ENCODE measurements at regions of chr1 and their contacts with region 1.

Region 1: DNA sequence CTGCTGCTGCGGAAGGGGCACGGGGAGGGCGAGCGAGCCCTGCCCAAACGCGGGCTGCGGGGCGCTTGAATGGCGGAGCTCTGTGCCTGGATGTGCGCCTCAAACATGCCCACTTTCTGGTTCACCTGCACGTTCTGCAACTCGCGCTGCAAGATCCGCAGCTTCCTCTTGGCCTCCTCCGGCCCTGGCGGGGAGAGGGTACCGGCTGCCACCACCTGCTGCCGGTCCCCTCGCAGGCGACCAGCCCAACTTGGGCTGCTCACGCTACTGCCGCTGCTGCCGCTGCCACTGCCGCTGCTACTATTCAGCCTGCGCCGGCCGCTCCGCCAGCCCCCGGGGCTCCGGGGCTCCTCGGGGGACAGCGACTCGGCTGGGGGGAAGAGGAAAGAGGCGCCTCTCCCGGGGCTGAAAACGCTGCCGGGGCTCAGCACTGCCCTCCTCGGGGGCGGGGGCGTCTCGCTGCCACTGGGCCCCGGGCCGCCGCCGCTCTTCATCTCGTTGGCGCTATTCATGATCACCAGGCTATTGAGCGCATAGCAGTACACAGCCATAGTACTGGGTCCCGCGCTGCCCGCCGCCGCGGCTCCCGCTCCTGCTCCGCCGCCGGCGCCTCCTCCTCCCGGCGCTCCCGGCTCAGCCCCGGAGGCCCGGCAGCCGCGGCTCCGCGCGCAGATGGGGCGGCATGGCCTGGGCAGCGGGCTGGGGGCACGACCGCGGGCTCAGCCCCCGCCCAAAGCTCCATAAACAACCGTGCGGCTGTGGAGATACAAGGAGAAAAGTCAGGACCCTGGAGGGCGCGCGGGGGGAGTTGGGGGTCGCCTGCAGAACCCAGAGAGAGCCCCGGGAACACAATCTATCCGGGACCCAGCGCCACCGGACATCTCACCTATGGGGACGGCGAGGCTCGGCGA is 1.9 kb downstream of the ITPKB start:
- DNase-seq: peak; percentile 24 to 32
- ATAC-seq: peak; percentile 70 to 71
- H3K4me3 ChIP-seq: peak overlapping the region; percentile 79 to 86 (median 84)
- H3K27ac ChIP-seq: peak overlapping the region; percentile 84 to 91 (median 88)
- H3K4me1 ChIP-seq: peaks cover 23 to 29% of the 10 kb centered on the region in 2 donors
- H3K27me3 ChIP-seq: no peaks in the 10 kb centered on the region
- CTCF ChIP-seq: peak in 3 of 5 experiments; percentile 15 to 31 (median 29)
- POLR2A ChIP-seq: peak; percentile 17 to 59

Region 2: DNA sequence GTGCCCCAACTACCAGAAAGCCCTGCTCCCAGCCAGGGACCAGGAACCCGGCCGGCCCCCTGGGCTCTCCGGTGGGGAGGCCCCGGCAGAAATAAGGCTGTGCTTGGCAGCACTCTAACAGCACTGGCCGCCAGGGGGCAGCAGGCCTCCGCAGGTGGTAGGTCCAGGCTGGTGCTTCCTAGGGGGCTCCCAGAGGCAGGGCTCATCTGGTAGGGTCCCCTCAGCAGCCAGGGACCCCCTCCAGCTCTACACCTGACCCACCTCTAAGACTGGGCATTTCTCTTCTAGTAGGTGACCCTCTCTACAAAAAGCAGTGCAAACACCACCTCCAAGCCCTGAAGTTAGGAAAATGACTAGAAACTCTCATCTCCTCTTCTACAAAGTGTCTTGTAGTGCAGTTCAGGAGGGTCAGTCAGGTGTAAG is 103.0 kb before region 1 on chr1:
- in situ Hi-C with region 1: no loop called
- intact Hi-C with region 1: loop called (anchors 5 kb)
- DNase-seq: peak; percentile 56 to 75
- ATAC-seq: peak; percentile 64 to 75
- H3K4me3 ChIP-seq: no peak overlapping the region
- H3K27ac ChIP-seq: peak overlapping the region; percentile 46 to 71 (median 66)
- H3K4me1 ChIP-seq: peaks cover 33 to 41% of the 10 kb centered on the region in 2 donors
- H3K27me3 ChIP-seq: no peaks in the 10 kb centered on the region
- CTCF ChIP-seq: peak; percentile 90 to 98 (median 98)
- POLR2A ChIP-seq: no peak

Region 3: DNA sequence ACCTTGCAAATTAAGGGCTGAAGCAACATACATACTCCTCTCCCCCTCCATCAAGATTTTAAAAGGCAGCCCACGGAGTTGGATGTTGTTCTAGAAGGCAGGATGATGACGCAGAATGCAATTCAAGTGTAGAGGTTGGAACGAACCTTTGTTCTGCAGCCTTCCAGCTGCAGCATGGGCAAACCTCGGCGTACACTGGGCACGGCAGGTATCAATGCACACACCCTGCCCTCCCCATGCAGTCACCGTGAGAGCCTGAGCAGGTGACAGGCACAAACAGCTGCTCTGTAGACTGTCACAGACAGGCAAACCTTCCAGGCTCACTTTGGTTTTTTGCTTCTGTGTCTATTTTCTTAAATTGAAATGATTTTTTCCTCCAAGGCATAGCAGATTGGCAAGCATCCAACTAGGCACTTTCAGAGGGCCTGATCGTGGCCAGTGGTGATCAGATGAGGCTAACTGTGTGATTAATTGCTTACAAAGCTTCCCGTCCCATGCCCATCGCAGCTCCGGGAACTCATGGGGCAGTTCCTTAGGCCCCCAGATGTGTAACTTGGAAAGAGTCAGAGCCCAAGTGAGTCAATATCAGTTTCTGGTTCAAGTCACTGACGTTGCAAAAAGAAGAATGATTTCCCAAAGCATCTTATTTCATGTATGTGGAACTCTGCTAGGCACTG is 80.4 kb before region 1 on chr1:
- in situ Hi-C with region 1: no loop called
- intact Hi-C with region 1: loop called (anchors 5 kb)
- DNase-seq: no peak
- ATAC-seq: peak; percentile 21 to 35
- H3K4me3 ChIP-seq: no peak overlapping the region
- H3K27ac ChIP-seq: no peak overlapping the region
- H3K4me1 ChIP-seq: peaks cover 77 to 79% of the 10 kb centered on the region in 2 donors
- H3K27me3 ChIP-seq: no peaks in the 10 kb centered on the region
- CTCF ChIP-seq: no peak
- POLR2A ChIP-seq: peak in 1 of 2 donors; percentile 21

Region 4: DNA sequence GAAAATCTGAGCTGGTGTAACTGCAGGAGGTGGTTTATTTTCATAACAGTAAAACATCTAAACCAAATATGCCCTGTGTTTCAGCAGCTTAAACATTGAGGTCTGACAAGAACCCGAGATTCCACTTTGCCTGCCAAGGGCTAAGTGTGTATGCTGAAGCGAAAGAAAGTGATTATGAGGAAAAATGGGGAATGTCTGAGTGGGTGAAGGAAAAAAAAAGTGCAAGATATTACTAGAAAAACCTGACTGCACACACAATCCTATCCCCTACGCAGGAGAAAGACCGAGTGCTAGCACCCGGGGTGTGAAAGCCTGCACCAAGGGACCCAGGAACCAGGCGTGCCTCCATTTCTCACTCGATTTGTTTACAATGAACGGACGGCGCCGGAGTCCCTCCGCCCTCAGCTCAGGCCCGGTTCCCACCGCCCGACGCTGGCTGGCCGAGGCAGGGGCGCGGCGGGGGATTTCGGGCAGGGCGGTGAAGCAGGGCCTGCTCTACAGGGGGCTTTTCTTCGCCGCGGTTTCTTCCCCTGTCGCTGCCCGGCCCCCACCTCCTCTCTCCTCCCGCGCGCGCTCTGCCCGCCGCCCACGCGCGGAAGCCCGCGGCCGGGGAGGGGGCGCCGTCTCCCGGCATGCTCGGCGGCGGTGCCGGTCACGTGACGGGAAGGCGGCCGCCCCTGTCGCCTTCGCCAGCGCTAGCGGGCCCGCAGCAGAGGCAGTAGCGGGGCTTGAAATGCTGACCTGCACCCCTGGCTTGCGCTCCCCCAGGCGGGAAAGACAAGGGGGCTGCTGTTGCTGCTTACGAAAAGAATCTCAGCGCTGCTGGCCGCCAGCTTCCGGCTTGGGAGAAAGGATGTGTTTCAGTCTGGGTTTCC is 34.0 kb before region 1 on chr1:
- in situ Hi-C with region 1: no loop called
- intact Hi-C with region 1: loop called (anchors 2 kb)
- DNase-seq: peak; percentile 57 to 65
- ATAC-seq: peak; percentile 61 to 63
- H3K4me3 ChIP-seq: peak overlapping the region; percentile 79 to 90 (median 84)
- H3K27ac ChIP-seq: peak overlapping the region; percentile 96 to 99 (median 98)
- H3K4me1 ChIP-seq: peaks cover 33 to 51% of the 10 kb centered on the region in 2 donors
- H3K27me3 ChIP-seq: no peaks in the 10 kb centered on the region
- CTCF ChIP-seq: peak in 2 of 5 experiments; percentile 21 to 32
- POLR2A ChIP-seq: peak; percentile 92 to 95

Region 5: DNA sequence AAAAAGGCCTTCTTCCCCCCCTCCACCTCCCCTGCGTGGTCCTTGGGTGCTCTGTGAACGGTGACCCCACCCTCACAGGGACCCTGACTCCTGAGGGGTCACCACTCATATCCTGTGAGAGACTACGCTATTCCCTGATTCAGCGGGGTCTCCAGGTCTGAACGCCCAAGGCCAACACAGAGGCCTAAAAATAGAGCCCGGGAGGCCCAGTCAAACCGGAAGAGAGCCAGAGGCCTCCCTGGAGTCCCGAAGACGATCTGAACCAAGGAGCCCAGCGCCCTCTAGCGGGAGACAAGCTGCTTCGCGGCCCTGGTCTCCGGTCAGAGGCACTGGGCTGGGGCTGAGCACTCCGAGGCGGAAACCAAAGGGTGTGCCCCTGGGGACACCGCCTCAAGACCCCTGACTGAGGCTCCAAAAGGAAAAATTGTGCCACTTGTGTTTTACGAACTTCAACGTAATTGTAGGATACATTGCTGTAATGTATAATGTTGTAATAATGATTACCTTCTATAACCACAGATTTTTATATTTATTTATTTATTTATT is 90.9 kb after region 1 on chr1:
- in situ Hi-C with region 1: loop called in 3 of 4 experiments (anchors 5 to 10 kb)
- intact Hi-C with region 1: loop called (anchors 1 kb)
- DNase-seq: peak; percentile 92 to 94
- ATAC-seq: peak; percentile 95 to 98
- H3K4me3 ChIP-seq: peak overlapping the region; percentile 16 to 50 (median 34)
- H3K27ac ChIP-seq: peak overlapping the region; percentile 69 to 87 (median 77)
- H3K4me1 ChIP-seq: peaks cover 11 to 14% of the 10 kb centered on the region in 2 donors
- H3K27me3 ChIP-seq: no peaks in the 10 kb centered on the region
- CTCF ChIP-seq: peak; percentile 93 to 98 (median 96)
- POLR2A ChIP-seq: no peak

Measured in gastrocnemius medialis (tissue), 4 donors.